Activated CD4-positive, alpha-beta T cell treated with anti-CD3 and anti-CD28 coated beads for 36 hours (primary cell): ENCODE measurements at regions of chr4 and their contacts with region 1.

Region 1: GRCh38 chr4:56977321-56978012 is at the start of gene NOA1:
- DNase-seq: peak; percentile 98
- ATAC-seq: peak; percentile 84
- H3K4me3 Mint-ChIP-seq: peak within 1 kb of the TSS; percentile 88
- H3K27ac Mint-ChIP-seq: peak within 1 kb of the TSS; percentile 97
- H3K4me1 Mint-ChIP-seq: peaks cover 51% of the 10 kb centered on the region
- H3K27me3 Mint-ChIP-seq: no peaks in the 10 kb centered on the region
- total RNA-seq, gene NOA1: 24.9 to 31.5 TPM

Region 2: GRCh38 chr4:55395529-55396307 is 1581.7 kb before region 1 on chr4 and contains the start of gene TMEM165:
- CTCF ChIA-PET with region 1: no interaction called
- POLR2A ChIA-PET with region 1: no interaction called
- intact Hi-C with region 1: loop called in 1 of 2 experiments (anchors 1 kb)
- DNase-seq: peak; percentile 96
- ATAC-seq: peak; percentile 97
- H3K4me3 Mint-ChIP-seq: peak within 1 kb of the TSS; percentile 89
- H3K27ac Mint-ChIP-seq: peak within 1 kb of the TSS; percentile 89
- H3K4me1 Mint-ChIP-seq: peaks cover 30% of the 10 kb centered on the region
- H3K27me3 Mint-ChIP-seq: no peaks in the 10 kb centered on the region
- total RNA-seq, gene TMEM165: 43.4 to 49.5 TPM

Region 3: DNA sequence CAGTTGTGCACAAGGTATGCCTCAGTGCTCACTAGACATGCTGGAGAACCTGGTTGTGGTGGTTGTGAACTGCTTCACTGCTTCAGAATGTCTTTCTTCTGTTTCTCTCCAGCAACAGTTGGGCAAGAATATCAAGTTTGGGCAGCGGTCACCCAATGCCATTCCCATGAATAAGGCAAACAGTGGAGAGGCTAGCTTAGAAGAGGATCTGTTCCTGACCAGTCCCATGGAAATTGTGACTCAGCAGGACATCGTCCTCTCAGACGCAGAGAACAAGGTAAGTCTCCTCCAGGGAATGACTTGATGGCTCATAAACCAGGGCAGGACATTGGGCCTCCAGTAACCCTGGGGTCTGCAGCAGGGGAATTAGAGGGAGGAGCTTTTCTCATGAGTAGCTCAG is 670.0 kb before region 1 on chr4:
- CTCF ChIA-PET with region 1: no interaction called
- POLR2A ChIA-PET with region 1: no interaction called
- intact Hi-C with region 1: no loop called
- DNase-seq: no peak
- ATAC-seq: no peak
- H3K4me3 Mint-ChIP-seq: no peak overlapping the region
- H3K27ac Mint-ChIP-seq: no peak overlapping the region
- H3K4me1 Mint-ChIP-seq: no peaks in the 10 kb centered on the region
- H3K27me3 Mint-ChIP-seq: no peaks in the 10 kb centered on the region

Region 4: GRCh38 chr4:56387023-56388001 is 590.2 kb before region 1 on chr4 and contains the start of gene AASDH:
- CTCF ChIA-PET with region 1: no interaction called
- POLR2A ChIA-PET with region 1: interaction called, 8 read pairs
- intact Hi-C with region 1: loop called (anchors 1 to 5 kb)
- DNase-seq: peak; percentile 97
- ATAC-seq: peak; percentile 94
- H3K4me3 Mint-ChIP-seq: peak within 1 kb of the TSS; percentile 98
- H3K27ac Mint-ChIP-seq: peak within 1 kb of the TSS; percentile 100
- H3K4me1 Mint-ChIP-seq: peaks cover 31% of the 10 kb centered on the region
- H3K27me3 Mint-ChIP-seq: no peaks in the 10 kb centered on the region
- total RNA-seq, gene AASDH: 13.3 to 16.4 TPM

Region 5: DNA sequence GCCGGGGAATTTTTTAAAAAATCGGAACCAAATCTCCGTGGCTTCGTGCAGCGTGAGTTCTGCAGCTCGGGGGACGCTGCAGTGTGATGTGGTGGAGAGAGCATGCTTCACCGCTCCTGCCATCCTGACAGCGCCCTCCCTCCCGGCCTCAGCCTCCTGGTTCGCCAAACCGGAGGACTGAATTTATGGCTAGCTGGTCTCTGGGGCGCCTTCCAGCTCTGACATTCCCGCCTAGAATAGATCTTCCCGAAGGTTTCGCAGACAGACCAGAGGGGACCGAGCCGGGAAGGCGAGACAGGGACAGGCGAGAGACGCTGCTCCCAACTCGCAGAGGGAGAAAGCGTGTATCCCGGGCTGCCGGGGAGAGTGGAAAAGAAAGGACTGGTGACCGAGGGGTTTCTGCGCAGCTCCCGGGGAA is 322.2 kb before region 1 on chr4:
- CTCF ChIA-PET with region 1: no interaction called
- POLR2A ChIA-PET with region 1: interaction called, 3 read pairs
- intact Hi-C with region 1: loop called in 1 of 2 experiments (anchors 5 kb)
- DNase-seq: peak; percentile 43
- ATAC-seq: no peak
- H3K4me3 Mint-ChIP-seq: peak overlapping the region; percentile 86
- H3K27ac Mint-ChIP-seq: peak overlapping the region; percentile 66
- H3K4me1 Mint-ChIP-seq: peaks cover 61% of the 10 kb centered on the region
- H3K27me3 Mint-ChIP-seq: peaks cover 18% of the 10 kb centered on the region

Region 6: GRCh38 chr4:56757821-56758411 is 219.6 kb before region 1 on chr4:
- CTCF ChIA-PET with region 1: no interaction called
- POLR2A ChIA-PET with region 1: no interaction called
- intact Hi-C with region 1: loop called in 1 of 2 experiments (anchors 5 kb)
- DNase-seq: peak; percentile 92
- ATAC-seq: peak; percentile 98
- H3K4me3 Mint-ChIP-seq: peak overlapping the region; percentile 49
- H3K27ac Mint-ChIP-seq: peak overlapping the region; percentile 91
- H3K4me1 Mint-ChIP-seq: peaks cover 59% of the 10 kb centered on the region
- H3K27me3 Mint-ChIP-seq: no peaks in the 10 kb centered on the region